ENCODE measurements at regions of chr15 and their contacts with region 1.

Region 1: DNA sequence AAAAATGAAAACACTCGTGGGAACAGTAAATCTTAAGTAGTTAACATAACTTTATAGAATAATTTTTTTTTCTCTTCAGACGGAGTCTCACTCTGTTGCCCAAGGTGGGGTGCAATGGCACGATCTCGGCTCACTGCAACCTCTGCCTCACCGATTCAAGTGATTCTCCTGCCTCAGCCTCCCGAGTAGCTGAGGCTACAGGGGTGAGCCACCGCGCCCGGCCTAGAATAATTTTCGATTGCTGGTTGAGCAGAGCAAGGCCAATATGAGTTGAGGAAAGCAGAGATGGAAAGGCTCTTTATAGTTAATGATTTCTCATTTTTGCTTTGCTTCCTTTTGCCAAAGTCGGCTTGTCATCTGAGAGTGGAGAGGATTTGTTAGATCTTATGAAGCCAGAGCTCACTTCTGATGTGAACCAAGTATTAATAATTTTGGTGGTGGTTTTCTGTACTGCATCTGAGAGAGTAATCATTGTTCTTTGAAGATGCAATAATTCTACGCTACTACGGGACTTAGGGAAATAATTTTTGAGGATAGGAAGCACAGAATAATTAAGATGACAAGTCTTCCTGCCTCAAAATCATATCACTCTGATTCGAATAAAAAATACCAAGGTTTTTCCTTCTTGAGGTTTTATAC is 1.6 kb upstream of the GOLM2 start:
- DNase-seq: no peak
- ATAC-seq: no peak
- H3K4me3 ChIP-seq: no peak overlapping the region
- H3K27ac ChIP-seq: no peak overlapping the region
- H3K4me1 ChIP-seq: peaks cover 4% of the 10 kb centered on the region; the same call in 1 of the 2 replicates
- H3K27me3 ChIP-seq: no peaks in the 10 kb centered on the region
- CTCF ChIP-seq: no peak
- POLR2A ChIP-seq: no peak
- RAD21 ChIP-seq: no peak

Region 2: DNA sequence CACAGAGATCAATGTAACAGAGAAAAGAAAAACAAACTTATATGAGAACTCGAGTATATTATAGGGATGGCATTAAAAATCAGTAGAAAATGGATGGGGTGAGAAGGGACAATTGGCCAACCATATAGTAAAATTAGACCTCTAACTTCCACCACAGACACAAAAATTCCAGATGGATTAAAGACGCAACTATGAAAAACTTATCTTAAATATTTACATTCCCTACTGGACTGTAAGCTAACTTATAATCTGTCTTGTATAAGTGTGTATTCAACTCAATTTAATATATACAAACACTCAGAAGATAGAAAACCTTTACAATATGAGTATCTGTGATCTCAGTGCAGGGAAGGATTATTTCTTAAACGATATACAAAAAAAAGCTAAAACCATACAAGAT is 465.4 kb before region 1 on chr15:
- CTCF ChIA-PET with region 1: no interaction called
- POLR2A ChIA-PET with region 1: interaction called, 11 read pairs
- dilution Hi-C with region 1: no loop called
- in situ Hi-C with region 1: no loop called
- intact Hi-C with region 1: no loop called
- DNase-seq: peak; percentile 80
- ATAC-seq: peak; percentile 55
- H3K4me3 ChIP-seq: no peak overlapping the region
- H3K27ac ChIP-seq: peak overlapping the region; percentile 71; the same call in 1 of the 2 replicates
- H3K4me1 ChIP-seq: peaks cover 4% of the 10 kb centered on the region
- H3K27me3 ChIP-seq: no peaks in the 10 kb centered on the region
- CTCF ChIP-seq: no peak
- POLR2A ChIP-seq: 0 out of 2 replicates have a peak, but pooled peaks have one; percentile 17
- RAD21 ChIP-seq: no peak

Region 3: GRCh38 chr15:43903864-43904290 is 383.1 kb before region 1 on chr15:
- CTCF ChIA-PET with region 1: no interaction called
- POLR2A ChIA-PET with region 1: no interaction called
- dilution Hi-C with region 1: no loop called
- in situ Hi-C with region 1: no loop called
- intact Hi-C with region 1: loop called (anchors 5 kb)
- DNase-seq: peak; percentile 58
- ATAC-seq: peak; percentile 94
- H3K4me3 ChIP-seq: no peak overlapping the region
- H3K27ac ChIP-seq: no peak overlapping the region
- H3K4me1 ChIP-seq: peaks cover 5% of the 10 kb centered on the region; the same call in 1 of the 2 replicates
- H3K27me3 ChIP-seq: no peaks in the 10 kb centered on the region
- CTCF ChIP-seq: peak; percentile 94
- POLR2A ChIP-seq: no peak
- RAD21 ChIP-seq: peak; percentile 97

Region 4: DNA sequence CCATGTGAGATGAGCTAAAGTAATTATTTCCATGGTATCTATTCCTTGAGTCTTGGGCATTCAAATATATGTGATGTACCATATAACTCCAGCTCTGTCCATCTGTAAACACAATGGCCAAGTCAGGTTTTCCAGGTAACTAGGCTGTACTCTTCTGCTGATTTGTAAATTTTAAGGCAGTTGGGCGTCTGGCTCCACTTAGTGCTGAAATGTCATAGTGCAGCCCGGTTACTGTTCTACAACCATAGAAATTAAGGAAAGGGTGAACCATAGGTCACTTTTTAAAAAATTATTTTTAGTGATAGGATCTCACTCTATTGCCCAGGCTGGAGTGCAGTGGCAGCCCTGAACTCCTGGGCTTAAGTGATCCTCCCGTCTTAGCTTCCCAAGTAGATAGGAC is 43.1 kb before region 1 on chr15:
- CTCF ChIA-PET with region 1: no interaction called
- POLR2A ChIA-PET with region 1: no interaction called
- dilution Hi-C with region 1: no loop called
- in situ Hi-C with region 1: no loop called
- intact Hi-C with region 1: no loop called
- DNase-seq: no peak
- ATAC-seq: no peak
- H3K4me3 ChIP-seq: no peak overlapping the region
- H3K27ac ChIP-seq: no peak overlapping the region
- H3K4me1 ChIP-seq: no peaks in the 10 kb centered on the region
- H3K27me3 ChIP-seq: no peaks in the 10 kb centered on the region
- CTCF ChIP-seq: 0 out of 2 replicates have a peak, but pooled peaks have one; percentile 20
- POLR2A ChIP-seq: no peak
- RAD21 ChIP-seq: 0 out of 2 replicates have a peak, but pooled peaks have one; percentile 12

Region 5: GRCh38 chr15:44426975-44427755 is 140.2 kb after region 1 on chr15 and contains the start of gene CTDSPL2:
- CTCF ChIA-PET with region 1: no interaction called
- POLR2A ChIA-PET with region 1: no interaction called
- dilution Hi-C with region 1: no loop called
- in situ Hi-C with region 1: no loop called
- intact Hi-C with region 1: loop called (anchors 2 kb)
- DNase-seq: peak; percentile 98
- ATAC-seq: peak; percentile 99
- H3K4me3 ChIP-seq: peak within 1 kb of the TSS; percentile 89
- H3K27ac ChIP-seq: peak within 1 kb of the TSS; percentile 89
- H3K4me1 ChIP-seq: no peaks in the 10 kb centered on the region
- H3K27me3 ChIP-seq: no peaks in the 10 kb centered on the region
- CTCF ChIP-seq: peak; percentile 48
- POLR2A ChIP-seq: peak; percentile 87
- RAD21 ChIP-seq: peak; percentile 25
- total RNA-seq, gene CTDSPL2: 47.3 and 97.5 TPM in 2 replicates

Region 6: DNA sequence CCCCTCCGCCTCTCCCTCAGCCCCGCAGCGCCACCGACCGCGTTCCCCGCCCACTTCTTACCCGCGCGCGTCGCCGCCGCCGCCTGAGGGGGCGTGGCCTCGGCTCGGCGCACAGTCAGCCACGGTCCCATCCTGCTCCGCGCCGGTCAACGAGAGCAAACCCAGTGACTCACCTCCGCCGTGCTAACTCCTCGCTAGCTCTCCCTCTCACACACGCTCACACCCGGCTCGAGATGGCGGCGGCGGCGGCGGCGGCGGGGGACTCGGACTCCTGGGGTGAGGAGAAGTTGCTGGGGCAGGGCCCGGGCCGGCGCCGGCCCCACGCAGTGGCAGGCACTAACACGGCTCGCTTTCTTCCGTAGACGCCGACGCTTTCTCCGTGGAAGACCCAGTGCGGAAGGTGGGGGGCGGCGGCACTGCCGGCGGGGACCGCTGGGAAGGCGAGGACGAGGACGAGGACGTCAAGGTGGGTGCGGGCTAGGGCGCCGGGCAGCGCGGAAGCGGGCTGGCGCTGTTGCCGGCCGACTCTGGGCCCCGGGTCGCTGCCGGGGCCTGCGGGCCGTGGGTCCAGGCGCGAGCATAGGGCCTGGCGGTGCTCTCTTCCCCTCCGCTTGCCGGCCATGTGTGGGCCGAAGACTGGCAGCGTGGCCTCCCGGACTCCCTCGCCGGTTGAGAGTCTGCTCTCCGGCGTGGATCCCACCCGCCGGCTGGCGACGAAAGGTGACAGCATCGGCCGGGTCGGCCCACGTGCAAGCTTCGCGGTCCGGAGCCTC is 250.2 kb after region 1 on chr15 and contains the start of gene EIF3J:
- CTCF ChIA-PET with region 1: no interaction called
- POLR2A ChIA-PET with region 1: interaction called, 13 read pairs
- dilution Hi-C with region 1: no loop called
- in situ Hi-C with region 1: no loop called
- intact Hi-C with region 1: no loop called
- DNase-seq: peak; percentile 97
- ATAC-seq: peak; percentile 87
- H3K4me3 ChIP-seq: peak within 1 kb of the TSS; percentile 88
- H3K27ac ChIP-seq: peak within 1 kb of the TSS; percentile 87
- H3K4me1 ChIP-seq: peaks cover 12% of the 10 kb centered on the region
- H3K27me3 ChIP-seq: no peaks in the 10 kb centered on the region
- CTCF ChIP-seq: no peak
- POLR2A ChIP-seq: peak; percentile 90
- RAD21 ChIP-seq: no peak
- total RNA-seq, gene EIF3J: 51.6 and 57.2 TPM in 2 replicates